Activated B cell treated with CpG ODN at 0.5 μM for 24 hours (primary cell): ENCODE measurements at regions of chr7 and their contacts with region 1.

Region 1: GRCh38 chr7:107661081-107661864 is 645 bp downstream of the SLC26A4 start:
- DNase-seq: peak; percentile 42
- ATAC-seq: peak; percentile 49
- H3K4me3 Mint-ChIP-seq: peak overlapping the region; percentile 88
- H3K27ac Mint-ChIP-seq: no peak overlapping the region
- H3K4me1 Mint-ChIP-seq: peaks cover 23% of the 10 kb centered on the region
- H3K27me3 Mint-ChIP-seq: peaks cover 20% of the 10 kb centered on the region
- CTCF ChIP-seq: no peak

Region 2: DNA sequence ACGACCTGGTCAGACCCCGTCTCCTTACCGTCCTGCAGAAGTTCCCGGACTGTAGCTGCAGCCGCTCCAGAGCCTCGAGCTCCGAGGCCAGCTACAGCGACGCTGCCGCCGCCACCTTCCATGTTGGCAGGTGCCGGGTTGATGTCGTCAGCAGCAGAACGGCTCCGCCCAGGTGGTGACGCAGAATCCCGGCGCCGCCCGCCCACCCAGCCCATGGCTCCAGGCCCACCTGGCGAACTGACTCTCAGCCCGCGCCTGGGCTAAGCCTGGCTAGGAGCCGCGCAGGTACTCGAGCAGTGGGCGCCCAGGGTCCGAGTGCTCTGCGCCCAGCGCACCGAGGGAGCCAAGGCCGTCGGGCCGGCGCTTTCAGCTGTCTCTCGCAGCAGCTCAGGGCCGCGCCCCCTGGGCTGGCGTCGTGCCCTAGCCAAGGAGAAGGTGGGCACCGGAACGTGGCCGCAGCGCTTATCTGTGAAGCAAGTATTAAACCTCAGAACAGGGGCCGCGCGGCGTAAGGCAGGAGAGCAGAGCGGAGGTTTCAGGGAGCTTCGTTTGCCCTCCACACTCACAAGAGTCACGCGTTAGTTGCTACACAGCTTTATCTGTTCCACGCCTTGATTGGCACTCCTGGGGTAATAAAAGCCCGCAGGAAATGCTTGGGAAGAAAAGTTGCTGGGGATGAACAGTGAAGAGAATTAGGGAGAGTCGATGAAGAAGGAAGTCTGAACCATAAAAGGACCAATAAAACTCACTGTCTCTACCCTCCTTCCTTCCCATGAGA is 97.3 kb before region 1 on chr7 and contains the starts of genes COG5 and DUS4L:
- CTCF ChIA-PET with region 1: interaction called, 10 read pairs
- POLR2A ChIA-PET with region 1: interaction called, 7 read pairs
- intact Hi-C with region 1: loop called (anchors 1 kb)
- DNase-seq: peak; percentile 83
- ATAC-seq: peak; percentile 93
- H3K4me3 Mint-ChIP-seq: peak within 1 kb of the TSS; percentile 93
- H3K27ac Mint-ChIP-seq: peak within 1 kb of the TSS; percentile 82
- H3K4me1 Mint-ChIP-seq: peaks cover 43% of the 10 kb centered on the region
- H3K27me3 Mint-ChIP-seq: no peaks in the 10 kb centered on the region
- CTCF ChIP-seq: no peak
- total RNA-seq, gene COG5: 40.6 and 47.0 TPM in 2 replicates
- total RNA-seq, gene DUS4L: 11.0 and 14.6 TPM in 2 replicates

Region 3: DNA sequence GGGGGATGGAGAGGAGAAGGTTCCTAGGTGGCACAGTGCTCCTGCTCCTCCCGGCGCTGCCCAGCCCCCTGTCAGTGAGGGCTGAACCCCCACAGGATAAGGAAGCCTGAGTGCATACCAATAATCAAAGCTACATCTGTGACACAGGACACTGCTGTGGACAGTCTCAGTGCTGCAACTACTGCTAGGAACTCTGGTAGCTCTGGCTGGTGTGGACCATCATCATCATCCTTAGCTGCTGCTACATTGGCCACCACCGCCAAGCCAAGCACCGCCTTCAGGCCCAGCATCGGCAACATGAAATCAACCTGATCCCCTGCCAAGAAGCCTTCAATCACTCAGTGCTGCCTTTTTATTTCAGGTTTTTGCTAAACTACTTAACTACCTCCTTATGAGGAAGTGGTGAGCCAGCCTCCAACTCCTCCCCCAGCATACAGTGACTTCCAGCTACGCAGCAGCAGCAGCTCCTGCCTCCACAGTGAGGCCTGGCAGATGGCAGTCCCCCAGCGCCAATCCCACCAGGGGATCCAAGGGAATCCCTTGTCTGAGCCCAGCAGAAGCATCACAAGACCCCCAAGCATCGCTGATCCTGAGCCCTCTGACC is 32.7 kb before region 1 on chr7:
- CTCF ChIA-PET with region 1: no interaction called
- POLR2A ChIA-PET with region 1: no interaction called
- intact Hi-C with region 1: loop called (anchors 5 kb)
- DNase-seq: no peak
- ATAC-seq: peak; percentile 90
- H3K4me3 Mint-ChIP-seq: peak overlapping the region; percentile 24
- H3K27ac Mint-ChIP-seq: peak overlapping the region; percentile 50
- H3K4me1 Mint-ChIP-seq: peaks cover 35% of the 10 kb centered on the region
- H3K27me3 Mint-ChIP-seq: no peaks in the 10 kb centered on the region
- CTCF ChIP-seq: no peak

Region 4: GRCh38 chr7:107644309-107644974 is 16.8 kb before region 1 on chr7:
- CTCF ChIA-PET with region 1: interaction called, 4 read pairs
- POLR2A ChIA-PET with region 1: no interaction called
- intact Hi-C with region 1: loop called (anchors 1 kb)
- DNase-seq: no peak
- ATAC-seq: no peak
- H3K4me3 Mint-ChIP-seq: no peak overlapping the region
- H3K27ac Mint-ChIP-seq: no peak overlapping the region
- H3K4me1 Mint-ChIP-seq: peaks cover 28% of the 10 kb centered on the region
- H3K27me3 Mint-ChIP-seq: no peaks in the 10 kb centered on the region
- CTCF ChIP-seq: no peak